ENCODE measurements at regions of chr18 and their contacts with region 1.

Region 1: DNA sequence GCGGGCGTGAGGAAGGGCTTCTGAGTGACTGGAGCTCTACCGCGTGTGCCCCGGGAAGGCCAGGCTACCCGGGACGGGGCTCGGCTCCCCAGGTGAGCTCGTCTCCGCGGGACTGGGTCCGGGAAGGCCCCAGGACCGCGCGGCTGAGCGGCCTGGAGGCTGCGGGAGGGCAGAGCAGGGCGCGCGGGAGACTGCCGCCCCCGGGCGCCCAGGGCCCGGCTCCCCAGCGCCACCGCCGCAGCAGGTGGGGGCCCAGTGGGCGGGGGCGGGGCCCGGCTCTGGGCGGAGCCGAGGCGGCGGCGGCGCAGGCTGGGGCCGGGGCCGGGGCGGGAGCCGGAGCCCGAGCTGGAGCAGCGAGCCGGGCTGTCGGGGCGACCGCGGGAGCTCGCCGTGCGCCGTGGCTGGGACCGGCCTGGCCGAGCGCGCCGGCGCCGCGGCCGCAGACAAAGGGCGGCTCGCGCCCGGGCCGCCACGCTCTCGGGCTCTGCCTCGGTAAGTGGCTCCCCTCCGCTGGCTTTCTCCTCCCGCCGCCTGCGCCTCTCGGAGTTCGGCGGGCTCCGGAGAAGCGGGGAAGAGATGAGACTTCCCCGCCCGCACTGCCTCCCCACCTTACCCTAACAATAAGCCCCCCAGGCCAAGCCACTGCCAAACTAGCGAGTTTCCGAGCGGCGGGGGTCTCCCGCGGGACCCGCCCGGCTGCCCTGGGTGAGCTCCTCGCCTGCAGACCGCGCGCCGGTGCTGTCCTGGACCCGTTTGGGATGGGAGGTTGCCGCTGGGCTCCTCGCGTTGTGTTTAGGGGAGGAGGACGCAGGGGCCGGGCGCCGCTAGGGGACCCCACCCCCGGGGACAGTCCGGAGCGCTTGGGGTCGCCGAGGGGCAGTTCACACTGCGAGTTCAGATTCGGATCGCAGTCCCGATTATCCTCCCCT is at the start of gene MAPK4:
- DNase-seq: no peak
- ATAC-seq: peak; percentile 93
- total RNA-seq, gene MAPK4: 34.1 TPM

Region 2: GRCh38 chr18:50507120-50507590 is 52.9 kb before region 1 on chr18:
- intact Hi-C with region 1: no loop called
- DNase-seq: no peak
- ATAC-seq: peak; percentile 82

Region 3: GRCh38 chr18:50649821-50650220 is 89.8 kb after region 1 on chr18:
- intact Hi-C with region 1: loop called (anchors 5 kb)
- DNase-seq: peak; percentile 79
- ATAC-seq: peak; percentile 85

Measured in Right ventricle myocardium inferior (tissue), 1 donor.